ENCODE measurements at regions of chr11 and their contacts with region 1.

Region 1: GRCh38 chr11:62841361-62842184 is 2.2 kb upstream of the WDR74 start:
- H3K4me3 ChIP-seq: peak overlapping the region; percentile 42
- H3K27ac ChIP-seq: peak overlapping the region; percentile 92
- H3K4me1 ChIP-seq: no peaks in the 10 kb centered on the region
- CTCF ChIP-seq: 0 out of 2 replicates have a peak, but pooled peaks have one; percentile 37

Region 2: DNA sequence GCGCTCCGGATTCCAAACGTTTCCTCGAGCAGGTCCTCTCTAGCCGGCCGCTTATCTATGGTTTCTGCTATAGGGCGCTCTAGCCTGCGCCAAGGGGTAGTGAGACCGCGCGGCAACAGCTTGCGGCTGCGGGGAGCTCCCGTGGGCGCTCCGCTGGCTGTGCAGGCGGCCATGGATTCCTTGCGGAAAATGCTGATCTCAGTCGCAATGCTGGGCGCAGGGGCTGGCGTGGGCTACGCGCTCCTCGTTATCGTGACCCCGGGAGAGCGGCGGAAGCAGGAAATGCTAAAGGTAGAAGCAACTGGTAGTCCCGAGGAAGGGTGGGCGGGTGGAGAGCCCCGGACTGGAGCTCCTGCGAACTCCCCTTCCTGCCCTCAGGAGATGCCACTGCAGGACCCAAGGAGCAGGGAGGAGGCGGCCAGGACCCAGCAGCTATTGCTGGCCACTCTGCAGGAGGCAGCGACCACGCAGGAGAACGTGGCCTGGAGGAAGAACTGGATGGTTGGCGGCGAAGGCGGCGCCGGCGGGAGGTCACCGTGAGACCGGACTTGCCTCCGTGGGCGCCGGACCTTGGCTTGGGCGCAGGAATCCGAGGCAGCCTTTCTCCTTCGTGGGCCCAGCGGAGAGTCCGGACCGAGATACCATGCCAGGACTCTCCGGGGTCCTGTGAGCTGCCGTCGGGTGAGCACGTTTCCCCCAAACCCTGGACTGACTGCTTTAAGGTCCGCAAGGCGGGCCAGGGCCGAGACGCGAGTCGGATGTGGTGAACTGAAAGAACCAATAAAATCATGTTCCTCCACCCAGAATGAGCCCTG is 169.8 kb before region 1 on chr11 and contains the starts of genes LBHD1 and UQCC3:
- CTCF ChIA-PET with region 1: no interaction called
- POLR2A ChIA-PET with region 1: interaction called, 16 read pairs
- H3K4me3 ChIP-seq: peak within 1 kb of the TSS; percentile 84
- H3K27ac ChIP-seq: peak within 1 kb of the TSS; percentile 65
- H3K4me1 ChIP-seq: no peaks in the 10 kb centered on the region
- CTCF ChIP-seq: no peak

Region 3: GRCh38 chr11:62753736-62754603 is 87.6 kb before region 1 on chr11 and contains the start of gene ZBTB3:
- CTCF ChIA-PET with region 1: interaction called, 3 read pairs
- POLR2A ChIA-PET with region 1: interaction called, 38 read pairs
- H3K4me3 ChIP-seq: peak within 1 kb of the TSS; percentile 73
- H3K27ac ChIP-seq: peak within 1 kb of the TSS; percentile 32; the same call in 1 of the 2 replicates
- H3K4me1 ChIP-seq: no peaks in the 10 kb centered on the region
- CTCF ChIP-seq: no peak

Region 4: GRCh38 chr11:62794201-62794775 is 47.3 kb before region 1 on chr11:
- CTCF ChIA-PET with region 1: no interaction called
- POLR2A ChIA-PET with region 1: interaction called, 22 read pairs
- H3K4me3 ChIP-seq: no peak overlapping the region
- H3K27ac ChIP-seq: no peak overlapping the region
- H3K4me1 ChIP-seq: no peaks in the 10 kb centered on the region
- CTCF ChIP-seq: no peak

Region 5: GRCh38 chr11:62860835-62861563 is 19.4 kb after region 1 on chr11:
- CTCF ChIA-PET with region 1: interaction called, 7 read pairs
- POLR2A ChIA-PET with region 1: interaction called, 182 read pairs
- H3K4me3 ChIP-seq: no peak overlapping the region
- H3K27ac ChIP-seq: peak overlapping the region; percentile 0; the same call in 1 of the 2 replicates
- H3K4me1 ChIP-seq: no peaks in the 10 kb centered on the region
- CTCF ChIP-seq: no peak